ENCODE measurements at regions of chr1 and their contacts with region 1.

Region 1: DNA sequence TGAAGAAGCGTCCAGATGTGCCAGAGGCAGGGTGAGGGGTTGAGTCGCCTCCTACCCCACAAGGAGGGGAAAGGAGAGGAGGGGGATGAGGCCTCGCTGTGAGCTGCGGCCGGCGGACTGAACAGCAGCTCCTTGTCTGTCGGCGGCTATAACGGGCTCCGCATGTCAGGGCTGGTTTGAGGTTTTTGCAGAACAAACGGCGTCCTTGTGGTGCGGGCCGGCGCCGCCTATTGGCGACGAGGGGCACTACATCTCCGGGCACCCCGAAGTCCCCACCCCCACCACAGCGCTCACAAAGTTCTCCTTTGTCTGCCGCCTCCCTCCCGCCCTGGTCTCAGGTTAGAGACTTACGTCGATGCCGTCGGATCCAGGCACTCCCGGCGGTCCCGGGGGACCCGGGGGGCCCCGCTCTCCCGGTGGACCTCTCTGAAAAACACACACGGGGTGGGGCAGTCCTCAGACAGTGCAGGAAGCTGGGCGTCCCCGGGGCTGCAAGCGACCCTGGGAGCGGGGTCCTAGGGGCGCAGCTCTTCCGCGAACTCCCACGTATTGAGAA is 1.8 kb downstream of the COL9A2 start:
- DNase-seq: peak; percentile 80
- H3K4me3 ChIP-seq: peak overlapping the region in 2 of 3 experiments; percentile 32 to 38
- H3K27ac ChIP-seq: no peak overlapping the region
- H3K4me1 ChIP-seq: peaks cover 20% of the 10 kb centered on the region
- H3K27me3 ChIP-seq: peaks cover 14% of the 10 kb centered on the region
- CTCF ChIP-seq: peak; percentile 77 to 92

Region 2: GRCh38 chr1:40153073-40153770 is 162.1 kb before region 1 on chr1:
- CTCF ChIA-PET with region 1: interaction called, 3 read pairs
- dilution Hi-C with region 1: no loop called
- in situ Hi-C with region 1: no loop called
- intact Hi-C with region 1: loop called (anchors 1 kb)
- DNase-seq: peak; percentile 40
- H3K4me3 ChIP-seq: peak overlapping the region in 1 of 3 experiments; percentile 23
- H3K27ac ChIP-seq: no peak overlapping the region
- H3K4me1 ChIP-seq: no peaks in the 10 kb centered on the region
- H3K27me3 ChIP-seq: no peaks in the 10 kb centered on the region
- CTCF ChIP-seq: peak; percentile 71 to 80

Region 3: GRCh38 chr1:40267767-40268187 is 47.5 kb before region 1 on chr1:
- CTCF ChIA-PET with region 1: no interaction called
- dilution Hi-C with region 1: no loop called
- in situ Hi-C with region 1: no loop called
- intact Hi-C with region 1: loop called (anchors 2 kb)
- DNase-seq: peak; percentile 89
- H3K4me3 ChIP-seq: no peak overlapping the region
- H3K27ac ChIP-seq: peak overlapping the region; percentile 89
- H3K4me1 ChIP-seq: peaks cover 37% of the 10 kb centered on the region
- H3K27me3 ChIP-seq: no peaks in the 10 kb centered on the region
- CTCF ChIP-seq: no peak